Panc1 (cell line): ENCODE measurements at regions of chr17 and their contacts with region 1.

Region 1: DNA sequence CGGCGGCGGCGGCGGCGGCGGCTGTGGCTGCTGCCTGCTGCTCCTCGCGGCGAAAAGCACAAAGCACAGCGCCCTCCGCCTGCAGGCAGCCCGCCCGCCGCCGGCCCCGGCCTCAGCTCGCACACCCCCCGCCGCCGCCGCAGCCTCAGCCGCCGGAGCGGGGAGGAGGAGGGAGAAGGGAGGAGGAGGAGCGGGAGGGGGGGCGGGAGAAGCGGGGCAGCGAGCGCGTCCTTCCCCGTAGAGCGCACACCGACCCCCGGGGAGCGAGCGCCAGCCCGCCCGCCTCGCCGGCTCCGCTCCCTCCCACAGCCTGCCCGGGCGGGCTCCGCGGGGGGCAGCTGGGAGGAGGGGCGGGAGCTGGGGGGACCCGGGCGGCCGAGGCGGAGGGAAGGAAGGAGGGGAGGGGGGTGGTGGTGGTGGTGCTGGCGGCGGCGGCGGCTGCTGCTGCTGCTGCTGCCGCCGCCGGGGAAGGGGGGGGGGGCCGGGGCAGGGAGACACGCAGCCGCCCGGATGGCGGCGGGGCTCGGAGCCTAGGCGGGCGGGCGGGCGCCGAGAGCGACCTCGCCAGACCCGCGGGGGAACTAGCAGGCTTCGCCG is at the start of gene UBTF:
- DNase-seq: no peak
- ATAC-seq: peak; percentile 41
- H3K4me3 ChIP-seq: peak within 1 kb of the TSS; percentile 69 to 77
- H3K27ac ChIP-seq: peak within 1 kb of the TSS; percentile 87
- H3K4me1 ChIP-seq: peaks cover 26% of the 10 kb centered on the region
- H3K27me3 ChIP-seq: no peaks in the 10 kb centered on the region
- CTCF ChIP-seq: 0 out of 2 replicates have a peak, but pooled peaks have one; percentile 1
- total RNA-seq, gene UBTF: 116 TPM

Region 2: DNA sequence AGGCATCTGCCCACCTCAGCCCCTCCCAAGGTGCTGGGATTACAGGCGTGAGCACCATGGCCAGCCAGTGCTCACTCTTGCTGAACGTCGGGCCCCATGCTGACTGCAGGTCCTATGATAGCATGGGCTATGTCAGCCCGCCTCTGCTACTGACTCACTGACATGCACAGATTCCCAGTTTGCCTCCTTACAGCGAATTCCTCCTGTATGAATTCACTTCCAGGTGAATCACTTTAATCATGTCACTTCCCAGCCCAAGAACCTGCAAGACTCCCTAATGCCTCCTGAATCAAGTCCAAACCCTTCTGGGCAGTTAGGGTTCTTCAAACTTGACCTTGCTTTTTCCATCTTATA is 15.8 kb after region 1 on chr17:
- CTCF ChIA-PET with region 1: no interaction called
- POLR2A ChIA-PET with region 1: interaction called, 10 read pairs
- in situ Hi-C with region 1: no loop called
- intact Hi-C with region 1: no loop called
- DNase-seq: peak; percentile 45
- ATAC-seq: peak; percentile 88
- H3K4me3 ChIP-seq: no peak overlapping the region
- H3K27ac ChIP-seq: no peak overlapping the region
- H3K4me1 ChIP-seq: no peaks in the 10 kb centered on the region
- H3K27me3 ChIP-seq: no peaks in the 10 kb centered on the region
- CTCF ChIP-seq: no peak

Region 3: DNA sequence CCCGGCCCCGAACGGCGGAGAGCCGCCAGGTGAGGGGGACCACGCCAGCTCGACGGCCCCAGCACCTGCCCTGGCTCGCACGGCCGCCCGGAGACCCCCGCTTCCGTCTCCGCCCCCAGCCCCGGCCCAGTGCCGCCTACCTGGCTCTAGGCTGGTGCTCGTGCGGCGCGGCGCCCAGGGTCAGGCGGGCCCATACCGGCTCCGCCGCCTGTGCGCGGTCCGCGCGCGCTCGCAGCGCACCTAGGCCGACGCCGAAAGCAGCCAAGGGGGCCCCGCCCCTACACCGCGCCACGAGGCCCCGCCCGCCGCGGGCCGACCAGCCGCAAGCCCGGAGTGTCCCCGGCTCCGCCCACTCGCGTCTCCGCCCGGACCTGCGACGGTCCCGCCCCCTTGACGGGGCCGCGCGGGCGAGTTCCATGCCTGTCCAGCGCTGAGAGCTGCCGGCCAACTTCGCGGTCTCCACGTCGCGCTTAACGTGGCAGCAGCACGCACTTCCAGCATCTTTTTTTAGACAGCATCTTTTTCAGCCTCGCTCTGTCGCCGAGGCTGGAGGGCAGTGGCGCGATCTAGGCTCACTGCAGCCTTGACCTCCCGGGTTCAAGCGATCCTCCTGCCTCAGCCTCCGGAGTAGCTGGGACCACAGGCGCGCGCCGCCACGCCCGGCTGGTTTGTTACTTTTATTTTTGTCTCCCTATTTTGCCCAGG is 105.0 kb after region 1 on chr17 and contains the start of gene SLC25A39:
- CTCF ChIA-PET with region 1: interaction called, 4 read pairs
- POLR2A ChIA-PET with region 1: interaction called, 6 read pairs
- in situ Hi-C with region 1: no loop called
- intact Hi-C with region 1: loop called (anchors 5 kb)
- DNase-seq: no peak
- ATAC-seq: peak; percentile 87
- H3K4me3 ChIP-seq: peak within 1 kb of the TSS; percentile 67 to 75
- H3K27ac ChIP-seq: peak within 1 kb of the TSS; percentile 84
- H3K4me1 ChIP-seq: no peaks in the 10 kb centered on the region; the same call in none of the 2 replicates
- H3K27me3 ChIP-seq: no peaks in the 10 kb centered on the region
- CTCF ChIP-seq: no peak
- total RNA-seq, gene SLC25A39: 138 TPM